ENCODE measurements at regions of chr1 and their contacts with region 1.

Region 1: GRCh38 chr1:172357753-172358385 is 62.6 kb upstream of the C1orf105 start:
- DNase-seq: peak; percentile 18
- H3K4me3 Mint-ChIP-seq: peak overlapping the region; percentile 53
- H3K27ac Mint-ChIP-seq: peak overlapping the region; percentile 87
- H3K4me1 Mint-ChIP-seq: peaks cover 62% of the 10 kb centered on the region
- H3K27me3 Mint-ChIP-seq: no peaks in the 10 kb centered on the region
- CTCF ChIP-seq: no peak

Region 2: DNA sequence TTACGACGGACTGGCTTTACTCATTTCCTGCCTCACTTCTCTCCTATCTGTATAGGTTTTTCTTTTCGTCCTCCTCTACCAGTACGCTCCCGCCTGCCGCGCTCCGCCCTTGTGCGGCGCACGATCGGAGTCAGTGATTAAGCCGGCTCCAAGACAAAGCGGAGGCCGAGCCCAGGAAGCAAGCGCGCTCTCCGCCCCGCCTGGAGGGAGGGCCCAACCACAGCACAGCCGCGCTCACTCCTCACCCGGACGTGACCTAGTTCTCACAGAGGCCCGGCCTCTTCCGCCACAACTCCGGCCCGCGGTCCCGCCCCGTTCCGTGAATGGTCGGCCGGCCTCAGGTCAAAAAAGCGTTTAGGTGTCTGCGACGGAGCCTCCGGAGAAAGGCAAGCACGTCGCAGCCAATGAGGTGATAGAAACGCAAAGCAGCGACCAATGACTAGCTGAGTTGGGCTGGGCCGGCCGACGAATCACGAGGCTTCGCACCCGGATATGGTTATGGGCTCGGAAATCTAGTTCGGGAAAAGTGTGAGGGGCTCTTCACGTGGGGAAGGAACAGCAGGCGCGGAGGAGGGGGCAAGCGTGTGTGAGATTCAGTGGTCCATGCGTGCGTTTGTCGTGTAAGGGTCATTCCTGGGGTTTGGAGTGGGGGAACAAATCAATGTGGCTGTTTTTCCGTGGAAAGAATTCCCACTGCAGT is 576.5 kb before region 1 on chr1 and contains the start of gene METTL13:
- CTCF ChIA-PET with region 1: interaction called, 4 read pairs
- POLR2A ChIA-PET with region 1: interaction called, 3 read pairs
- intact Hi-C with region 1: loop called (anchors 10 kb)
- DNase-seq: peak; percentile 100
- H3K4me3 Mint-ChIP-seq: peak within 1 kb of the TSS; percentile 84
- H3K27ac Mint-ChIP-seq: peak within 1 kb of the TSS; percentile 95
- H3K4me1 Mint-ChIP-seq: peaks cover 28% of the 10 kb centered on the region
- H3K27me3 Mint-ChIP-seq: no peaks in the 10 kb centered on the region
- CTCF ChIP-seq: no peak
- total RNA-seq, gene METTL13: 30.7 and 39.1 TPM in 2 replicates

Region 3: GRCh38 chr1:172254521-172255222 is 103.2 kb before region 1 on chr1:
- CTCF ChIA-PET with region 1: no interaction called
- POLR2A ChIA-PET with region 1: interaction called, 4 read pairs
- intact Hi-C with region 1: loop called (anchors 5 kb)
- DNase-seq: peak; percentile 78
- H3K4me3 Mint-ChIP-seq: no peak overlapping the region
- H3K27ac Mint-ChIP-seq: peak overlapping the region; percentile 5
- H3K4me1 Mint-ChIP-seq: peaks cover 18% of the 10 kb centered on the region
- H3K27me3 Mint-ChIP-seq: no peaks in the 10 kb centered on the region
- CTCF ChIP-seq: no peak

Region 4: DNA sequence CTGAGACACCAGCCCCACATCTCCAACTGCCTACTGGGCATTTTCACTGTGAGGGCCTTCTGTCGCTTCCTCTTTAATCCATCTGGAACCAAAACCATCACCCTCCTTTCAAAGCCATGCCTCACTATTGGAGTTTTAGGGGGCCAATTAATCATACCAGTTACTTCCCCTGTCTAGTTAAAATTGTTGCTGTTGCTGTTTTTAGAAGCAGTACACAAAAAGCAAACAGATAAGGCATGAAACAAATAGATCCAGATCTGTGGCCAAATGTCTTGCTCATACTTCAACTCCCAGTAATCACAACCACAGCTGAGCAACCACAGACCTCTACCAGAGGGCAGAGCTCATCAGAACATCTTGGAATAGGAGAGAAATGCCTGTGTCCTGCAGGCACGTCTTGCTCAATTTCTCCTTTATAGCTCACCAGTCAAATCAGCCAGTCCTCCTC is 71.2 kb before region 1 on chr1:
- CTCF ChIA-PET with region 1: interaction called, 16 read pairs
- POLR2A ChIA-PET with region 1: interaction called, 52 read pairs
- intact Hi-C with region 1: loop called (anchors 1 kb)
- DNase-seq: peak; percentile 94
- H3K4me3 Mint-ChIP-seq: no peak overlapping the region
- H3K27ac Mint-ChIP-seq: peak overlapping the region; percentile 61
- H3K4me1 Mint-ChIP-seq: peaks cover 26% of the 10 kb centered on the region
- H3K27me3 Mint-ChIP-seq: no peaks in the 10 kb centered on the region
- CTCF ChIP-seq: no peak

Region 5: GRCh38 chr1:172322219-172323061 is 35.4 kb before region 1 on chr1:
- CTCF ChIA-PET with region 1: interaction called, 11 read pairs
- POLR2A ChIA-PET with region 1: interaction called, 32 read pairs
- intact Hi-C with region 1: loop called (anchors 1 kb)
- DNase-seq: peak; percentile 89
- H3K4me3 Mint-ChIP-seq: no peak overlapping the region
- H3K27ac Mint-ChIP-seq: no peak overlapping the region
- H3K4me1 Mint-ChIP-seq: peaks cover 13% of the 10 kb centered on the region
- H3K27me3 Mint-ChIP-seq: no peaks in the 10 kb centered on the region
- CTCF ChIP-seq: no peak

Region 6: GRCh38 chr1:172343240-172344160 is 14.4 kb before region 1 on chr1:
- CTCF ChIA-PET with region 1: interaction called, 4 read pairs
- POLR2A ChIA-PET with region 1: interaction called, 31 read pairs
- intact Hi-C with region 1: no loop called
- DNase-seq: peak; percentile 72
- H3K4me3 Mint-ChIP-seq: peak overlapping the region; percentile 51
- H3K27ac Mint-ChIP-seq: peak overlapping the region; percentile 98
- H3K4me1 Mint-ChIP-seq: peaks cover 14% of the 10 kb centered on the region
- H3K27me3 Mint-ChIP-seq: no peaks in the 10 kb centered on the region
- CTCF ChIP-seq: no peak

Region 7: GRCh38 chr1:172373864-172374263 is 16.0 kb after region 1 on chr1:
- CTCF ChIA-PET with region 1: interaction called, 6 read pairs
- POLR2A ChIA-PET with region 1: interaction called, 27 read pairs
- intact Hi-C with region 1: no loop called
- DNase-seq: peak; percentile 41
- H3K4me3 Mint-ChIP-seq: no peak overlapping the region
- H3K27ac Mint-ChIP-seq: peak overlapping the region; percentile 10
- H3K4me1 Mint-ChIP-seq: peaks cover 13% of the 10 kb centered on the region
- H3K27me3 Mint-ChIP-seq: no peaks in the 10 kb centered on the region
- CTCF ChIP-seq: no peak

Region 8: GRCh38 chr1:172460887-172461315 is 103.0 kb after region 1 on chr1:
- CTCF ChIA-PET with region 1: no interaction called
- POLR2A ChIA-PET with region 1: no interaction called
- intact Hi-C with region 1: no loop called
- DNase-seq: no peak
- H3K4me3 Mint-ChIP-seq: no peak overlapping the region
- H3K27ac Mint-ChIP-seq: no peak overlapping the region
- H3K4me1 Mint-ChIP-seq: peaks cover 12% of the 10 kb centered on the region
- H3K27me3 Mint-ChIP-seq: no peaks in the 10 kb centered on the region
- CTCF ChIP-seq: no peak

Region 9: DNA sequence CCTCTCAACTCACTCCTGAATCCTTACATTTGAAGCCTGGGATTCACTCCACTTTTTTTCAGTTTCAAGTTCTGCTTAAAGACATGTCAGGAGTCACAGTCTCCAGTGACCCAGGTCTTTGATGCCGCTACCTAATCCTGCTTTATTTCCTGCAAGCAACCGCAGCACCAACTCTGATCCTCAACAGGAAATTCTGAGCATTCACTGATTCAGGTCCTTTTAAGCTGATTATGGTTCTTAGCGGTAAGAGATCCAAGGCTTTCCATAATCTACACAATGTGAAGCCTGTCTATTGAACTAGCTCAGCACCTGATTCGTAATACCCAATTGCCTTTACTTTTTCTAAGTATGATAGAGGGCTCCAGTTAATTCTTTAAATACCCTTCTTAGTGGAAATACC is 129.7 kb after region 1 on chr1:
- CTCF ChIA-PET with region 1: no interaction called
- POLR2A ChIA-PET with region 1: no interaction called
- intact Hi-C with region 1: no loop called
- DNase-seq: no peak
- H3K4me3 Mint-ChIP-seq: no peak overlapping the region
- H3K27ac Mint-ChIP-seq: no peak overlapping the region
- H3K4me1 Mint-ChIP-seq: no peaks in the 10 kb centered on the region
- H3K27me3 Mint-ChIP-seq: peaks cover 59% of the 10 kb centered on the region
- CTCF ChIP-seq: no peak

Region 10: GRCh38 chr1:172609528-172609927 is 251.7 kb after region 1 on chr1:
- CTCF ChIA-PET with region 1: no interaction called
- POLR2A ChIA-PET with region 1: no interaction called
- intact Hi-C with region 1: no loop called
- DNase-seq: peak; percentile 40
- H3K4me3 Mint-ChIP-seq: no peak overlapping the region
- H3K27ac Mint-ChIP-seq: no peak overlapping the region
- H3K4me1 Mint-ChIP-seq: peaks cover 8% of the 10 kb centered on the region
- H3K27me3 Mint-ChIP-seq: no peaks in the 10 kb centered on the region
- CTCF ChIP-seq: peak; percentile 37